MCF 10A (cell line): ENCODE measurements at regions of chr3 and their contacts with region 1.

Region 1: GRCh38 chr3:61381745-61382392 is 130.6 kb upstream of the FHIT start:
- DNase-seq: peak; percentile 56
- H3K4me3 Mint-ChIP-seq: no peak overlapping the region
- H3K27ac Mint-ChIP-seq: no peak overlapping the region
- H3K4me1 Mint-ChIP-seq: peaks cover 11% of the 10 kb centered on the region
- H3K27me3 Mint-ChIP-seq: peaks cover 53% of the 10 kb centered on the region
- CTCF ChIP-seq: peak; percentile 46

Region 2: GRCh38 chr3:60582288-60582687 is 799.6 kb before region 1 on chr3:
- CTCF ChIA-PET with region 1: interaction called, 3 read pairs
- POLR2A ChIA-PET with region 1: no interaction called
- intact Hi-C with region 1: loop called (anchors 2 kb)
- DNase-seq: peak; percentile 35
- H3K4me3 Mint-ChIP-seq: no peak overlapping the region
- H3K27ac Mint-ChIP-seq: no peak overlapping the region
- H3K4me1 Mint-ChIP-seq: no peaks in the 10 kb centered on the region
- H3K27me3 Mint-ChIP-seq: no peaks in the 10 kb centered on the region
- CTCF ChIP-seq: peak; percentile 12

Region 3: GRCh38 chr3:60755096-60755495 is 626.8 kb before region 1 on chr3:
- CTCF ChIA-PET with region 1: no interaction called
- POLR2A ChIA-PET with region 1: no interaction called
- intact Hi-C with region 1: loop called (anchors 5 kb)
- DNase-seq: peak; percentile 53
- H3K4me3 Mint-ChIP-seq: no peak overlapping the region
- H3K27ac Mint-ChIP-seq: no peak overlapping the region
- H3K4me1 Mint-ChIP-seq: no peaks in the 10 kb centered on the region
- H3K27me3 Mint-ChIP-seq: no peaks in the 10 kb centered on the region
- CTCF ChIP-seq: peak; percentile 48

Region 4: GRCh38 chr3:61530355-61530754 is 148.5 kb after region 1 on chr3:
- CTCF ChIA-PET with region 1: interaction called, 3 read pairs
- POLR2A ChIA-PET with region 1: no interaction called
- intact Hi-C with region 1: loop called (anchors 5 kb)
- DNase-seq: peak; percentile 67
- H3K4me3 Mint-ChIP-seq: no peak overlapping the region
- H3K27ac Mint-ChIP-seq: no peak overlapping the region
- H3K4me1 Mint-ChIP-seq: peaks cover 4% of the 10 kb centered on the region
- H3K27me3 Mint-ChIP-seq: no peaks in the 10 kb centered on the region
- CTCF ChIP-seq: peak; percentile 70